Dendritic cell treated with granulocyte-macrophage colony-stimulating factor and Interleukin-4, amounts not matched to agents 40 ng/mL and 50 ng/mL, for 4 days (primary cell): ENCODE measurements at regions of chr10 and their contacts with region 1.

Region 1: DNA sequence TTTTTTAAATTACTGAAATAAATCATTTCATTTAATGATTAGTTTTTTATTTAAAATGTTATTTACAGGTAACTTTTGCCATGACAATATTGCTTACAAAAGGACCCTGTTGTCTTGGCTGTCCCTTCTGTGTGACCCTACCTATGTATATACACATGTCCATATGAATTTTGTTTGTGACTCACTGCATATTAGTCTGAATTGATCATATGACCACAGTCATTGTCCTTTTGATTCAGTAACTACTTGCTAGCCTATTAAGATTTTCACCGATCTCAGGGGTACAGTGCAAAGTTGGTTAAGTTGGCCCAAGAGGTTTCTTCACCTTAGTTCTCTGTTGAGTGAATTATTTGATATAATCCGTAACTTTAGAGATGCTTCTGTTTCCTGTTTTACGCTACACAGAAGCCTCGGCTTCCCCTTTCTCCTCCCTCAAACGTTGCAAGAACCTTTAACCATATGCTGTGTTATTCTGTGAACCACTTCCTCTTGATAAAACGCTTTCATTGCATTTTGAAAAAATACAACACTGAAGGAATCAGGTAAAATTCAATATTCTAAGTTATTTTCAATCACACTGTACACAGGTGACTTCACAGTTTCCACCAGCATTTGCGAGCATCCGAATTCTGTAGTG is 43.9 kb downstream of the APBB1IP start:
- H3K4me3 Mint-ChIP-seq: no peak overlapping the region
- H3K27ac Mint-ChIP-seq: peak overlapping the region; percentile 70
- H3K4me1 Mint-ChIP-seq: peaks cover 61% of the 10 kb centered on the region
- H3K27me3 Mint-ChIP-seq: no peaks in the 10 kb centered on the region

Region 2: DNA sequence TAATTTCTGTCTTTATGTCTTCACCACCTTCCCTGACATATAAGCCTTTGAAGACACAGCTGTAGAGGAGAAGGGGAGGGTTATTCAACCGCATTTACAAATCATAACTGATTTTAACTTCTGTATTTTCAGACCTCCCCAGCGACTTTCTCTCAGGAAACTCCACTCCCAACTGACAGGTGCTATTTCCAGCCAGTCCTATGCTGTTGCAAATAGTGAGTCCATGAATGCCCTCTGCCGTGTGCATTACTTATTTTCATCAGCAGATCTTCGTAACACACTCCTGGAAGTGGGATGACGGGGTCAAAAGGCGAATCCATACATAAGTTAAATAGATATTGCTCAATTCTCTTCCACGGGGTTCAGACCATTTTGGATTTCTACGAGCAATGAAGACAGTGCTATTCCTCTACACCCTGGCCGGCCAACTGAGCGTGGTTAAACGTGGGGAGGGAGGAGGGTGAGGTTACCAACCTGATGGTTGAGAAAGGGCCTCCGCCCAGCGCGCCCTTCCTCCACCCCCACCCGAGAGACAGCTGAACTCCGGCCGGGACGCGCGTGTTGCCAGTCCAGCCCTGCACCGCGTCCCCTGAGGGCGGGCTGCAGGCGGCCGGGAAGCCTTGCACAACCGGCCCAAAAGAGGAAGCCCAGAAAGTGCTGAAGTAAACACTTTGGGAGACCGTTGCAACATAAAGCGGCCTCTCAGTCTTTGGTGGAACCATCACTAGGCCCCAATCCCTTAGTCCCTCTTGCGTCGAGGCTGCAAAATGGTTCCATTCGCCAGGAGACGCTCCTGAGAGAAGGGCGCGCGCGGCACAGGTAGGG is 44.2 kb before region 1 on chr10 and contains the start of gene APBB1IP:
- intact Hi-C with region 1: loop called (anchors 2 kb)
- H3K4me3 Mint-ChIP-seq: peak within 1 kb of the TSS; percentile 94
- H3K27ac Mint-ChIP-seq: peak within 1 kb of the TSS; percentile 97
- H3K4me1 Mint-ChIP-seq: peaks cover 53% of the 10 kb centered on the region
- H3K27me3 Mint-ChIP-seq: no peaks in the 10 kb centered on the region

Region 3: GRCh38 chr10:26528715-26529393 is 46.8 kb after region 1 on chr10:
- intact Hi-C with region 1: loop called (anchors 5 kb)
- H3K4me3 Mint-ChIP-seq: no peak overlapping the region
- H3K27ac Mint-ChIP-seq: peak overlapping the region; percentile 84
- H3K4me1 Mint-ChIP-seq: peaks cover 66% of the 10 kb centered on the region
- H3K27me3 Mint-ChIP-seq: no peaks in the 10 kb centered on the region

Region 4: DNA sequence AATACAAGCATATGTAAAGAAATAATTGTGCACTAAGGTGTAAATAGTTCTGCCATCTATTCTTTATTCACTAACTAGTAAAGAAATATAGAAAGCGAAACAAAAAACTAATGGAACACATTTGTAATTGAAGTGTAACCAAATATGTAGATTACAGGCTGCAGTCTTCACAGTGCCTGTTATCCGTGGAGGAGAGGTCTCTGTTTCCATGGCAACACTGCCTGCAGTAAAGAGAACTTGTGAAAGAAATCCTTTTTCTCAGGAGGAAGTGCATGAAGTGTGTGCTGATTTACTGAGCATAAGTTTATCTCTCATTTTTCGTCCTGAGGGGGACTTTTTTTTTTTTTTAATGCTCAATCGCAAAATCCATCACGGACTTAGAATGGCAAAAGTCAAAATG is 58.6 kb after region 1 on chr10:
- intact Hi-C with region 1: loop called (anchors 5 kb)
- H3K4me3 Mint-ChIP-seq: no peak overlapping the region
- H3K27ac Mint-ChIP-seq: peak overlapping the region; percentile 52
- H3K4me1 Mint-ChIP-seq: peaks cover 39% of the 10 kb centered on the region
- H3K27me3 Mint-ChIP-seq: no peaks in the 10 kb centered on the region

Region 5: DNA sequence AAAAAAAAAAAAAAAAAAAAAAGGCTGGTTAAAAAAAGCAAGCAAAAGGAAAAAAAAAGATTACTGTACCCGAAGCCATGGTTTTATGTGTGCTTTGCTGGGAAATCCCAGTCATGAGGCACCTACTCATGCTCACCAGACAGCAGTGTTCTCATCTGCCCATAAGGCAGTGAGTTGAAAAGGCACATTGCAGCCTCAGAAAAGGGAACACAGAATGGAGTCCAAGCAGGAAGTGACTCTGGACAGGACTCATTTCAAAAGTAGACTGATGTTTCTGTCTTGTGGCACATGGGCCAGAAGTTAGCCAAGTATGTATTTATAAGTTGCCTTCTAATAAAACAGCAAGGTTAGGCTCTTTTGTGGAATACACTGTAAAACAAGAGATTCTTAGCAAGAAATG is 255.7 kb after region 1 on chr10:
- intact Hi-C with region 1: no loop called
- H3K4me3 Mint-ChIP-seq: no peak overlapping the region
- H3K27ac Mint-ChIP-seq: peak overlapping the region; percentile 89
- H3K4me1 Mint-ChIP-seq: peaks cover 42% of the 10 kb centered on the region
- H3K27me3 Mint-ChIP-seq: no peaks in the 10 kb centered on the region